ENCODE measurements at regions of chr11 and their contacts with region 1.

Region 1: GRCh38 chr11:101848262-101848661 is 66.5 kb upstream of the CEP126 start:
- DNase-seq: no peak
- ATAC-seq: no peak
- H3K4me3 ChIP-seq: no peak overlapping the region
- H3K27ac ChIP-seq: no peak overlapping the region
- H3K4me1 ChIP-seq: no peaks in the 10 kb centered on the region
- H3K27me3 ChIP-seq: no peaks in the 10 kb centered on the region
- CTCF ChIP-seq: peak in 2 of 3 experiments; percentile 49 to 63; a peak in 3 of 6 replicates
- POLR2A ChIP-seq: no peak
- RAD21 ChIP-seq: peak; percentile 71

Region 2: DNA sequence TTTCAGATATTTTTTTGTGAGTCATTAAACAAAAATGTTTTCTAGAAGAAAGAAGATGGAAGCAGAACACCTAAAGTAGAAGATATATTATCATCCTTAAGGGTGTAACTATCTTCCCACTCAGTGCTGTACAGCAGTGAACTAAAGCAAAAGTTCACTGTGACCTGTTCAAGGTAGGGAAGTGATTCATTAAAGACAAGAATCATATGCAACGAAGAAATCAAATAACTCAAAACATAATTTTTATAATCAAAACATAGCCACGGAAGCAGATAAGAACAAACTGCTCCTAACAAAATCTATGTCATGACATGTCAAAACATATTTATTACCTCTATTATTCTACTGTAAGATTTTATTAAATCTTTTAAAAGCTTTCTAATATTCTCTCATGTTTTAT is 769.8 kb before region 1 on chr11:
- CTCF ChIA-PET with region 1: no interaction called
- POLR2A ChIA-PET with region 1: no interaction called
- RAD21 ChIA-PET with region 1: no interaction called
- intact Hi-C with region 1: no loop called
- DNase-seq: no peak
- ATAC-seq: no peak
- H3K4me3 ChIP-seq: no peak overlapping the region
- H3K27ac ChIP-seq: no peak overlapping the region
- H3K4me1 ChIP-seq: no peaks in the 10 kb centered on the region
- H3K27me3 ChIP-seq: no peaks in the 10 kb centered on the region
- CTCF ChIP-seq: no peak
- POLR2A ChIP-seq: no peak
- RAD21 ChIP-seq: no peak

Region 3: GRCh38 chr11:101428918-101429317 is 419.3 kb before region 1 on chr11:
- CTCF ChIA-PET with region 1: interaction called, 4 read pairs
- POLR2A ChIA-PET with region 1: no interaction called
- RAD21 ChIA-PET with region 1: no interaction called
- intact Hi-C with region 1: loop called (anchors 2 kb)
- DNase-seq: peak; percentile 29
- ATAC-seq: peak; percentile 97
- H3K4me3 ChIP-seq: no peak overlapping the region
- H3K27ac ChIP-seq: no peak overlapping the region
- H3K4me1 ChIP-seq: 0 out of 4 replicates have a peak, but pooled peaks cover 0 to 4% of the 10 kb centered on the region in 2 experiments
- H3K27me3 ChIP-seq: no peaks in the 10 kb centered on the region
- CTCF ChIP-seq: peak; percentile 34 to 63 (median 53); a peak in 5 of 6 replicates
- POLR2A ChIP-seq: no peak
- RAD21 ChIP-seq: peak; percentile 68

Region 4: DNA sequence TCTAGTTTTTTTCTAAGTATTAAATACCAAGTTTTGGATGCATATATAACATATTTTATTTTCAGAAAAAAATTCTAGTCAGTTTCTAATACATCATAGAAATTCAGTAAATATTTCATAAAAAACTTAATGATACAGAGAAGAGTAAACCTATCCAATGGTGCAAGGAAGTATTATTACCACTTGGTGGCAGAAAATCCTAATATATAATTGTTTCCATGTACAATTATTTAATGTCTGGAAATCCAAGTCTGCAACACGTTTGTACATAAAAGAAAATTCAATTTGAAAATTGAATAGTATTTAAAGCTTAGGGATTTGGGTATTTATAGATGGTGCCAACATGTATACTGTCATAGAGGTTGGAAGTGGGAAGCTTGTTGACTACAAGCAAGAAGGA is 391.4 kb before region 1 on chr11:
- CTCF ChIA-PET with region 1: interaction called, 40 read pairs
- POLR2A ChIA-PET with region 1: no interaction called
- RAD21 ChIA-PET with region 1: no interaction called
- intact Hi-C with region 1: loop called (anchors 1 kb)
- DNase-seq: no peak
- ATAC-seq: peak; percentile 53; the same call in 1 of the 2 replicates
- H3K4me3 ChIP-seq: no peak overlapping the region
- H3K27ac ChIP-seq: no peak overlapping the region
- H3K4me1 ChIP-seq: no peaks in the 10 kb centered on the region
- H3K27me3 ChIP-seq: no peaks in the 10 kb centered on the region
- CTCF ChIP-seq: peak; percentile 21 to 56 (median 48); a peak in 4 of 6 replicates
- POLR2A ChIP-seq: no peak
- RAD21 ChIP-seq: peak; percentile 66

Region 5: GRCh38 chr11:101726988-101727387 is 121.3 kb before region 1 on chr11:
- CTCF ChIA-PET with region 1: no interaction called
- POLR2A ChIA-PET with region 1: no interaction called
- RAD21 ChIA-PET with region 1: no interaction called
- intact Hi-C with region 1: no loop called
- DNase-seq: no peak
- ATAC-seq: no peak
- H3K4me3 ChIP-seq: no peak overlapping the region
- H3K27ac ChIP-seq: no peak overlapping the region
- H3K4me1 ChIP-seq: no peaks in the 10 kb centered on the region
- H3K27me3 ChIP-seq: no peaks in the 10 kb centered on the region
- CTCF ChIP-seq: no peak
- POLR2A ChIP-seq: no peak
- RAD21 ChIP-seq: no peak

Region 6: GRCh38 chr11:101759771-101760450 is 88.4 kb before region 1 on chr11:
- CTCF ChIA-PET with region 1: interaction called, 19 read pairs
- POLR2A ChIA-PET with region 1: no interaction called
- RAD21 ChIA-PET with region 1: no interaction called
- intact Hi-C with region 1: loop called (anchors 5 kb)
- DNase-seq: peak; percentile 40
- ATAC-seq: peak; percentile 86
- H3K4me3 ChIP-seq: no peak overlapping the region
- H3K27ac ChIP-seq: no peak overlapping the region
- H3K4me1 ChIP-seq: peaks cover 9 to 22% of the 10 kb centered on the region in 2 experiments
- H3K27me3 ChIP-seq: no peaks in the 10 kb centered on the region
- CTCF ChIP-seq: peak; percentile 41 to 61 (median 54); a peak in 5 of 6 replicates
- POLR2A ChIP-seq: no peak
- RAD21 ChIP-seq: peak; percentile 63

Region 7: GRCh38 chr11:101860696-101861427 is 12.6 kb after region 1 on chr11:
- CTCF ChIA-PET with region 1: interaction called, 14 read pairs
- POLR2A ChIA-PET with region 1: no interaction called
- RAD21 ChIA-PET with region 1: no interaction called
- intact Hi-C with region 1: no loop called
- DNase-seq: peak; percentile 57
- ATAC-seq: peak; percentile 96
- H3K4me3 ChIP-seq: no peak overlapping the region
- H3K27ac ChIP-seq: no peak overlapping the region
- H3K4me1 ChIP-seq: peaks cover 0 to 38% of the 10 kb centered on the region in 2 experiments; a peak in 2 of 4 replicates
- H3K27me3 ChIP-seq: no peaks in the 10 kb centered on the region
- CTCF ChIP-seq: peak; percentile 78 to 81 (median 81)
- POLR2A ChIP-seq: no peak
- RAD21 ChIP-seq: peak; percentile 80

Region 8: GRCh38 chr11:101940901-101941520 is 92.7 kb after region 1 on chr11:
- CTCF ChIA-PET with region 1: no interaction called
- POLR2A ChIA-PET with region 1: no interaction called
- RAD21 ChIA-PET with region 1: no interaction called
- intact Hi-C with region 1: no loop called
- DNase-seq: no peak
- ATAC-seq: no peak
- H3K4me3 ChIP-seq: no peak overlapping the region
- H3K27ac ChIP-seq: no peak overlapping the region
- H3K4me1 ChIP-seq: no peaks in the 10 kb centered on the region
- H3K27me3 ChIP-seq: no peaks in the 10 kb centered on the region
- CTCF ChIP-seq: no peak
- POLR2A ChIP-seq: no peak
- RAD21 ChIP-seq: no peak

Region 9: GRCh38 chr11:102171101-102171500 is 322.8 kb after region 1 on chr11:
- CTCF ChIA-PET with region 1: no interaction called
- POLR2A ChIA-PET with region 1: no interaction called
- RAD21 ChIA-PET with region 1: no interaction called
- intact Hi-C with region 1: no loop called
- DNase-seq: no peak
- ATAC-seq: no peak
- H3K4me3 ChIP-seq: no peak overlapping the region
- H3K27ac ChIP-seq: no peak overlapping the region
- H3K4me1 ChIP-seq: peaks cover 17 to 53% of the 10 kb centered on the region in 2 experiments
- H3K27me3 ChIP-seq: no peaks in the 10 kb centered on the region
- CTCF ChIP-seq: no peak
- POLR2A ChIP-seq: no peak
- RAD21 ChIP-seq: 0 out of 2 replicates have a peak, but pooled peaks have one; percentile 1